GM10248 (cell line): ENCODE measurements at regions of chr4 and their contacts with region 1.

Region 1: GRCh38 chr4:52925531-52925968 is 63.4 kb downstream of the RASL11B start:
- DNase-seq: no peak
- CTCF ChIP-seq: no peak

Region 2: DNA sequence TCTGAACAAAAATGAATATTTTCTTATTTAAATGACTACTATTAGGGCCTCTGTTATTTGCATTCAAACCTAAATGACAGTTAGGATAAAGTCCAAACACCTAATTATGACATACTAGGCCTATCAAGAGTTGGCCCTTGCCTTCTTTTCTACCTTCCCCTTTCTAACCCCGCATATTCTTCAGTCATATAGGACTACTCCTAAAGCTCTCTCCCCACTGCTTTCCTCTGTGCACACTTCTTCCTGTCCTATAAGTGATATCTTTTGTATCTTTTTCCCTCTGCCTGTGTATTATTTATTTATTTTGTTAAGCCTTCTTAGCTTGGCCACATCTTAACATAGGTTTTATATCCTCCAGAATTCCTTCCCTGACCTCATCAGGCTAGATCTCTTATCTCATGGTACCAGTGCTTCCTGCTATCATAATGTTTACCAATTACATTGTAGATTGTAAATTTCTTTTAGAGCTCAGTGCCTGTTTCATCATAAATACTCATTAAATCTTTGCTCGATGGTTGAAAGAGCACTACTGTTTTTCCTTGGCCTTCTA is 196.8 kb before region 1 on chr4:
- CTCF ChIA-PET with region 1: no interaction called
- POLR2A ChIA-PET with region 1: no interaction called
- DNase-seq: no peak
- CTCF ChIP-seq: no peak

Region 3: DNA sequence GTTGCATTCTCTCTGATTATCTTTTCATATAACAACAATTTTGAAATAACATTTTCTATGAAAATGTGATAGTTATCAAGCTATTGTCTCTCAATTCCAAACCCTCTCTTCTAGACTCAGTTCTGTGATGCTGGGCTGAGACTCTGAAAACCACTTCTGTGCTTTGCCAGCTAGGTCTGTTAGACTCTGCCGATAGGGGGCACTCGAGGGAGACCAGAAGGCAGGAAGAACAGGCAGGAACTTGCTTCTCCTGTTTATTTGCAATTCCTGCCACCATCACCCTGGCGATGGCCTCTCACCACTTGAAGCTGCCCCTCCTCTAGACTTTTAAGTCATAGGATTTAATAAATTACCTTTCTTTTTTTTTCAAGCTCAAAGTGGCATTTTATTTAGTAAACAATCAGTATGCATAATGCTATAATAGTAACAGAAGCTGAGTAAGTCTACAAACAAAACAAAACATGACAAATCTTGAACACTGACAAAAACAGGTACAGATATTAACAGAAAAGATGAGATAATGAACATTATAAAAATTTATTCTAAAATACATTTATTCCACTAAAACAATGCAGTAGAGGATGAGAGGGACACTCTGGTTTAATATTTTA is 13.8 kb before region 1 on chr4:
- CTCF ChIA-PET with region 1: interaction called, 46 read pairs
- POLR2A ChIA-PET with region 1: no interaction called
- DNase-seq: peak; percentile 53
- CTCF ChIP-seq: peak; percentile 79